Dorsolateral prefrontal cortex (tissue), 120 donors: ENCODE measurements at regions of chr13 and their contacts with region 1.

Region 1: GRCh38 chr13:79936368-79937136 is 404.4 kb downstream of the SPRY2 start:
- DNase-seq: peak in 9 of 10 donors; percentile 40 to 78 (median 56)
- H3K4me3 ChIP-seq: peak overlapping the region in 34 of 59 donors; percentile 2 to 45 (median 21)
- H3K27ac ChIP-seq: peak overlapping the region; percentile 69 to 98 (median 95)
- H3K27me3 ChIP-seq: no peaks in the 10 kb centered on the region
- CTCF ChIP-seq: peak in 5 of 56 donors; percentile 10 to 31 (median 21)

Region 2: GRCh38 chr13:79775830-79776229 is 160.7 kb before region 1 on chr13:
- intact Hi-C with region 1: loop called in 1 of 2 experiments (anchors 10 kb)
- DNase-seq: peak in 5 of 10 donors; percentile 40 to 68 (median 50)
- H3K4me3 ChIP-seq: no peak overlapping the region
- H3K27ac ChIP-seq: no peak overlapping the region
- H3K27me3 ChIP-seq: no peaks in the 10 kb centered on the region
- CTCF ChIP-seq: peak in 55 of 56 donors; percentile 52 to 83 (median 72)

Region 3: DNA sequence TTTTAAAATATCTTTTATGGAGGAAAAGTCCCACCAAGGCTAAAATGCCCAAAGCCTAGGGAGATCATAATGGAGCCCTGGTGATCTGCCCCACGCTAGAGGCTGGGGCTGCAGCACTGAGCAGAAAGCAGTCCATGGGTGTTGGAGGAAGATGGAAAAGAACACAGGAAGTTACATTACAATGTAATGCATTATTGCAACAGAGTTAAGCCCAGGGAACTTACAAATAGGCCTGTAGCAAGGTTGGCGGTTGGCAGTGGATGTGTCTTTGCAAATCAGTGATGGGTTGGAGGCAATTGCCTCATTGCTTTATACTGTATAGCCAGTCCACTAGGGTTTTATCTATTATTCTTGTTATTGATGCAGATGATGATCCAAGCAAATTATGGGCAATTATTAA is 55.7 kb before region 1 on chr13:
- intact Hi-C with region 1: no loop called
- DNase-seq: no peak
- H3K4me3 ChIP-seq: no peak overlapping the region
- H3K27ac ChIP-seq: no peak overlapping the region
- H3K27me3 ChIP-seq: no peaks in the 10 kb centered on the region
- CTCF ChIP-seq: no peak

Region 4: DNA sequence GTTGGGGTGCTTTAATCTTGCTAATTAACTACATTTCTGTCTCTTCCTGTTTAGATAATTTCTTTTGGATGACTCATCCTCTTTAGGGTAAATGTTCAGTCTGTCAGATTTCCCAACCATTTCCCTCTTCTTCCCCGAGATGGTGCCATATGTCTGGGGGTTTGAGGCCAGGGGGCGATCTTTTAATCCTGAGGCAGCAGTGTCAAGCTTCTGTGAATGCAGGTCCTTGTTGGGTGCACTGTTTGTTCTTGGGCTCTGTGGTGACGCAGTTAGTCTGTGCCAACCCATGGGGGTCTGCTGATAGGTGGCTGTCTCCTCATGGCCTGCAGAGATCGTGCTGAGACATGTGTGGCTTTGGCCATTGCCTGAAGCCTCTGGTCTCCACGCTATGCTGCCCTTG is 35.2 kb before region 1 on chr13:
- intact Hi-C with region 1: loop called in 1 of 2 experiments (anchors 5 kb)
- DNase-seq: peak in 6 of 10 donors; percentile 10 to 54 (median 40)
- H3K4me3 ChIP-seq: peak overlapping the region in 8 of 59 donors; percentile 8 to 32 (median 19)
- H3K27ac ChIP-seq: peak overlapping the region in 6 of 59 donors; percentile 15 to 42 (median 26)
- H3K27me3 ChIP-seq: no peaks in the 10 kb centered on the region
- CTCF ChIP-seq: peak in 51 of 56 donors; percentile 24 to 70 (median 42)

Region 5: GRCh38 chr13:79988573-79988972 is 52.0 kb after region 1 on chr13:
- intact Hi-C with region 1: no loop called
- DNase-seq: no peak
- H3K4me3 ChIP-seq: no peak overlapping the region
- H3K27ac ChIP-seq: no peak overlapping the region
- H3K27me3 ChIP-seq: no peaks in the 10 kb centered on the region
- CTCF ChIP-seq: no peak

Region 6: GRCh38 chr13:80012251-80012650 is 75.7 kb after region 1 on chr13:
- intact Hi-C with region 1: loop called (anchors 1 to 2 kb)
- DNase-seq: no peak
- H3K4me3 ChIP-seq: peak overlapping the region in 10 of 59 donors; percentile 29 to 56 (median 46)
- H3K27ac ChIP-seq: peak overlapping the region in 43 of 59 donors; percentile 15 to 92 (median 85)
- H3K27me3 ChIP-seq: no peaks in the 10 kb centered on the region
- CTCF ChIP-seq: no peak

Region 7: GRCh38 chr13:80132741-80133601 is 196.4 kb after region 1 on chr13:
- intact Hi-C with region 1: loop called in 1 of 2 experiments (anchors 5 kb)
- DNase-seq: peak; percentile 25 to 86 (median 68)
- H3K4me3 ChIP-seq: peak overlapping the region in 58 of 59 donors; percentile 9 to 65 (median 44)
- H3K27ac ChIP-seq: peak overlapping the region; percentile 73 to 98 (median 95)
- H3K27me3 ChIP-seq: no peaks in the 10 kb centered on the region
- CTCF ChIP-seq: peak in 9 of 56 donors; percentile 4 to 24 (median 22)

Region 8: GRCh38 chr13:80145171-80145690 is 208.7 kb after region 1 on chr13:
- intact Hi-C with region 1: no loop called
- DNase-seq: no peak
- H3K4me3 ChIP-seq: no peak overlapping the region
- H3K27ac ChIP-seq: peak overlapping the region in 3 of 59 donors; percentile 8 to 20 (median 20)
- H3K27me3 ChIP-seq: no peaks in the 10 kb centered on the region
- CTCF ChIP-seq: no peak